Common myeloid progenitor, CD34-positive (primary cell): ENCODE measurements at regions of chr2 and their contacts with region 1.

Region 1: GRCh38 chr2:120305296-120305695 is 40.6 kb upstream of the INHBB start:
- DNase-seq: peak in 1 of 3 donors; percentile 31
- H3K4me3 ChIP-seq: no peak overlapping the region
- H3K27ac ChIP-seq: no peak overlapping the region
- H3K4me1 ChIP-seq: peaks cover 8 to 14% (median 10%) of the 10 kb centered on the region in 4 experiments
- H3K27me3 ChIP-seq: no peaks in the 10 kb centered on the region

Region 2: GRCh38 chr2:120291401-120292311 is 13.6 kb before region 1 on chr2:
- CTCF ChIA-PET with region 1: interaction called, 14 read pairs
- POLR2A ChIA-PET with region 1: interaction called, 3 read pairs
- DNase-seq: peak; percentile 57 to 81 (median 67)
- H3K4me3 ChIP-seq: no peak overlapping the region
- H3K27ac ChIP-seq: no peak overlapping the region
- H3K4me1 ChIP-seq: peaks cover 5 to 21% (median 18%) of the 10 kb centered on the region in 4 experiments
- H3K27me3 ChIP-seq: no peaks in the 10 kb centered on the region